ENCODE measurements at regions of chr11 and their contacts with region 1.

Region 1: GRCh38 chr11:134050541-134051383 is 18.1 kb upstream of the JAM3 start:
- DNase-seq: peak; percentile 34
- H3K4me3 ChIP-seq: peak overlapping the region in 1 of 3 experiments; percentile 25
- H3K27ac ChIP-seq: no peak overlapping the region
- H3K4me1 ChIP-seq: no peaks in the 10 kb centered on the region
- H3K27me3 ChIP-seq: no peaks in the 10 kb centered on the region
- CTCF ChIP-seq: peak; percentile 77 to 90

Region 2: GRCh38 chr11:133911171-133911570 is 139.6 kb before region 1 on chr11:
- CTCF ChIA-PET with region 1: no interaction called
- dilution Hi-C with region 1: no loop called
- in situ Hi-C with region 1: no loop called
- intact Hi-C with region 1: no loop called
- DNase-seq: no peak
- H3K4me3 ChIP-seq: no peak overlapping the region
- H3K27ac ChIP-seq: no peak overlapping the region
- H3K4me1 ChIP-seq: no peaks in the 10 kb centered on the region
- H3K27me3 ChIP-seq: no peaks in the 10 kb centered on the region
- CTCF ChIP-seq: peak; percentile 11 to 27

Region 3: DNA sequence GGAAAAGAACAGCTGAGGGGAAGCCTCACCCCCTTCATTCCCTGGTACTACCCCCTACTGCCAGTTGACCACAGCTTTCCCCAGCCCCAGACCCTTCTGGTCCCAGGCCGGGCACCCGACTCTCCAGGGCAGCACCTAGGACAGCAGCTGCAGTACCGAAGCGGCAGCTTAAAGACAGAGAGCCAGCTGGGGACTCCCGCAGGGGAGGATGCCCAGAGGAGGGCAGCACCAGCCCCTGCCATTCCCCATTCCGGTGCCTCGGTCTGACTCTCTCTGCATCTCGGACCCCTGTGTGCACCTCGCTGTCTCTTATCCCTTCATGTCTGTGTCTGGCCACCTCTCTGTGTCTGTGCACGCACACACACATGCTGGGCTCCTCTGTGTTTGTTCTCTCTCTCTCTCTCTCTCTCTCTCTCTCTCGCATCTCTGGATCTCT is 103.4 kb before region 1 on chr11:
- CTCF ChIA-PET with region 1: no interaction called
- dilution Hi-C with region 1: no loop called
- in situ Hi-C with region 1: loop called (anchors 10 to 25 kb)
- intact Hi-C with region 1: loop called (anchors 1 kb)
- DNase-seq: peak; percentile 21
- H3K4me3 ChIP-seq: no peak overlapping the region
- H3K27ac ChIP-seq: no peak overlapping the region
- H3K4me1 ChIP-seq: peaks cover 31% of the 10 kb centered on the region
- H3K27me3 ChIP-seq: no peaks in the 10 kb centered on the region
- CTCF ChIP-seq: peak; percentile 24 to 57

Region 4: DNA sequence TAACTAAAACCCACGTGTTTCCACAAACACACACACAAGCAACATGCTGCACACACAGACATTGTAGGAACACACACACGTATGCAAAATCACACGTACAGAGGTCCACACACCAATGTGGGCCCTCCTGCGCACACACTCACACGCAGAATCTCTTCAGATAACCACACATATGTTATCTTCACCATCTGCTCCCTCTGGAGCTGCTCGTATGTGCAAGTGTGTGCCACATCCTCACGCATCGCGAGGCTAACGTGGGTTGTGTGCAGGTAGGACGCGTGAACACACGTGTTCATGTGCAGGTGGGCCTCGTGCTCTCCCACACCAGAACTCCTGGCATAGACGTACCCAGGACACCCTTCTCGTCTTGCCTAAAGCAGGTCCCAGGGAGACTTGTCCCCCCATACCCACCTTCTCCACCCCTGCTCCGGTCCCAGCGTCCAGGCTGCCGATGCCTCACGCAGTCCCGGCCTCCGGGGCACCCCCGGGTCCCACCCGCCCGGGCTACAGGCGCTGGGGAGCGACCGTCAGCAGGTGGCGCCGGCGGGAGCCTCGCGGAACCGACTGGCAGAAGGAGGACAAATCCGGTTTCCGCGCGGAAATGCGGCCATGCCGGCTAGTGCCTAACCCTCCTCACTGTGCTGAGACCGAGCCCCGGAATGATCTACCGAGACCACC is 83.7 kb before region 1 on chr11:
- CTCF ChIA-PET with region 1: no interaction called
- dilution Hi-C with region 1: no loop called
- in situ Hi-C with region 1: no loop called
- intact Hi-C with region 1: loop called (anchors 5 kb)
- DNase-seq: no peak
- H3K4me3 ChIP-seq: no peak overlapping the region
- H3K27ac ChIP-seq: no peak overlapping the region
- H3K4me1 ChIP-seq: no peaks in the 10 kb centered on the region
- H3K27me3 ChIP-seq: no peaks in the 10 kb centered on the region
- CTCF ChIP-seq: peak; percentile 15 to 47

Region 5: GRCh38 chr11:134014511-134014910 is 36.3 kb before region 1 on chr11:
- CTCF ChIA-PET with region 1: no interaction called
- dilution Hi-C with region 1: no loop called
- in situ Hi-C with region 1: no loop called
- intact Hi-C with region 1: loop called (anchors 2 kb)
- DNase-seq: no peak
- H3K4me3 ChIP-seq: no peak overlapping the region
- H3K27ac ChIP-seq: no peak overlapping the region
- H3K4me1 ChIP-seq: no peaks in the 10 kb centered on the region
- H3K27me3 ChIP-seq: no peaks in the 10 kb centered on the region
- CTCF ChIP-seq: peak in 1 of 2 donors; percentile 19

Region 6: GRCh38 chr11:134139873-134140331 is 89.1 kb after region 1 on chr11:
- CTCF ChIA-PET with region 1: interaction called, 3 read pairs
- dilution Hi-C with region 1: loop called (anchors 5 kb)
- in situ Hi-C with region 1: loop called (anchors 5 kb)
- intact Hi-C with region 1: loop called (anchors 1 kb)
- DNase-seq: peak; percentile 58
- H3K4me3 ChIP-seq: no peak overlapping the region
- H3K27ac ChIP-seq: no peak overlapping the region
- H3K4me1 ChIP-seq: no peaks in the 10 kb centered on the region
- H3K27me3 ChIP-seq: no peaks in the 10 kb centered on the region
- CTCF ChIP-seq: peak; percentile 90 to 97

Region 7: DNA sequence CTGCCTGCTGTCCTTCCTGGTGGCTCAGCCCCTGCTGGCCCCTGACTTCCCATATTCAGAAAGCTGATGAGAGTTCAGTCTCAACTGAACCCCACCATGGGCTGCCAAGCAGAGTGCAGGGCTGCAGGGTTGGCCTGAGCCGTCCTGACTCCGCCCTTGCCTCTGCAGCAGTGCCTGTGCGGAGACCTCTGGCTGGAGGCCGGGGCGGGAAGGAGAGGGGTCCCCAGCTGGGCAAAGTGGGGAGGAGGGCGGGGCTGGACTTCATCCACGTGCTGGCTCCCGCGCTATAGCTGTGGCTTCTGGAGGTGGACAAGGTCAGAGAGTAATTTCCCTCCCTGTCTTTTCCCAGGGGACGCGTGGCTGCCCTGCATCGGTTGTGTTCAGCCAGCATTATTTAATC is 239.0 kb after region 1 on chr11:
- CTCF ChIA-PET with region 1: no interaction called
- dilution Hi-C with region 1: no loop called
- in situ Hi-C with region 1: no loop called
- intact Hi-C with region 1: no loop called
- DNase-seq: no peak
- H3K4me3 ChIP-seq: no peak overlapping the region
- H3K27ac ChIP-seq: no peak overlapping the region
- H3K4me1 ChIP-seq: no peaks in the 10 kb centered on the region
- H3K27me3 ChIP-seq: no peaks in the 10 kb centered on the region
- CTCF ChIP-seq: no peak

Measured in mammary epithelial cell (primary cell).